ENCODE measurements at regions of chr5 and their contacts with region 1.

Region 1: GRCh38 chr5:56774957-56775356 is 40.4 kb upstream of the MAP3K1 start:
- DNase-seq: no peak
- H3K4me3 ChIP-seq: no peak overlapping the region
- H3K27ac ChIP-seq: no peak overlapping the region
- H3K4me1 ChIP-seq: no peaks in the 10 kb centered on the region
- H3K27me3 ChIP-seq: no peaks in the 10 kb centered on the region
- CTCF ChIP-seq: no peak

Region 2: DNA sequence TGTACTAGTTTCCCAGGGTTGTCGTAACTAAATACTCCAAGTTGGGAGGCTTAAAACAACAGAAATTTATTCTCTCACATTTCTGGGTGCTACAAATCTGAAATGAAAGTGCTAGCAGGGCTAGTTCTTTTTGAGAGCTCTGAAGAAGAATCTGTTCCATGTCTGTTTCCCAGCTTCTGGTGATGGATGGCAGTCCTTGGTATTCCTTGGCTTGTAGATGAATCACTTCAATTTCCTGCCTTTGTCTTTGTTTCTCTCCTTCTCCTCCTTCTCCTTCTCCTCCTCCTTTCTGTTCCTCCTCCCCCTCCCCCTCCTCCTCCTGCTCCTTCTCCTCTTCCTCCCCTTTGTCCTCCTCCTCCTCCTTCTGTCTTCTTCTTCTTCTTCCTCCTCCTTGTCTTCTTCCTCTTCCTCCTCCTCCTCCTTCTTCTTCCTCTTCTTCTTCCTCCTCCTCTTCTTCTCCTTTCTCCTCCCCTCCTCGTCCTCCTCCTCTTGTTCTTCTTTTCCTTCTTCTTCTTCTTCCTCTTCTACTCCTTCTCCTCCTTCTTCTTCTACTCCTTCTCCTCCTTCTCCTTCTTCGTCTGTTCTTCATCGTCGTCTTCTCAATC is 437.1 kb before region 1 on chr5:
- CTCF ChIA-PET with region 1: no interaction called
- POLR2A ChIA-PET with region 1: interaction called, 22 read pairs
- intact Hi-C with region 1: no loop called
- DNase-seq: no peak
- H3K4me3 ChIP-seq: no peak overlapping the region
- H3K27ac ChIP-seq: no peak overlapping the region
- H3K4me1 ChIP-seq: no peaks in the 10 kb centered on the region
- H3K27me3 ChIP-seq: no peaks in the 10 kb centered on the region
- CTCF ChIP-seq: no peak

Region 3: DNA sequence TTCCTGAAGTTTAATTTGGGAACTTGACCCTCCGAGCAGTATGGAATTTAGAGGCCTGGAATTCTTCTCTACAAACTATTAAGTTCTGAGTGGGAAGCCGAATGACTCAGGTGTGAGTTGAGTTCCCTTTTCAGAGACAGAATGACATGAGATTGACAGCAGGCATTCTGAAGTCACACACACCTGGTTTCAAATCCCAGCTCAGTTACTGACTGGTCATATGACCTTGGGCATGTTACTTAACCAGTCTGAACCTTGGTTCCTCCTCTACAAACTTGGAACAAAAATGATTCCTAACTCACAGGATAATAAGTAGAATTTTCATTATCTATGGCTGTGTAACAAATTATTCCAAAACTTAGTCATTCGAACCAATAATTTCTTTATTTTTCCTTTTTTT is 353.4 kb after region 1 on chr5:
- CTCF ChIA-PET with region 1: no interaction called
- POLR2A ChIA-PET with region 1: no interaction called
- intact Hi-C with region 1: no loop called
- DNase-seq: no peak
- H3K4me3 ChIP-seq: no peak overlapping the region
- H3K27ac ChIP-seq: no peak overlapping the region
- H3K4me1 ChIP-seq: no peaks in the 10 kb centered on the region
- H3K27me3 ChIP-seq: no peaks in the 10 kb centered on the region
- CTCF ChIP-seq: no peak